Cardiac septum (tissue), 1 donor: ENCODE measurements at regions of chr5 and their contacts with region 1.

Region 1: GRCh38 chr5:10689391-10690081 is 71.5 kb downstream of the DAP start:
- DNase-seq: no peak

Region 2: DNA sequence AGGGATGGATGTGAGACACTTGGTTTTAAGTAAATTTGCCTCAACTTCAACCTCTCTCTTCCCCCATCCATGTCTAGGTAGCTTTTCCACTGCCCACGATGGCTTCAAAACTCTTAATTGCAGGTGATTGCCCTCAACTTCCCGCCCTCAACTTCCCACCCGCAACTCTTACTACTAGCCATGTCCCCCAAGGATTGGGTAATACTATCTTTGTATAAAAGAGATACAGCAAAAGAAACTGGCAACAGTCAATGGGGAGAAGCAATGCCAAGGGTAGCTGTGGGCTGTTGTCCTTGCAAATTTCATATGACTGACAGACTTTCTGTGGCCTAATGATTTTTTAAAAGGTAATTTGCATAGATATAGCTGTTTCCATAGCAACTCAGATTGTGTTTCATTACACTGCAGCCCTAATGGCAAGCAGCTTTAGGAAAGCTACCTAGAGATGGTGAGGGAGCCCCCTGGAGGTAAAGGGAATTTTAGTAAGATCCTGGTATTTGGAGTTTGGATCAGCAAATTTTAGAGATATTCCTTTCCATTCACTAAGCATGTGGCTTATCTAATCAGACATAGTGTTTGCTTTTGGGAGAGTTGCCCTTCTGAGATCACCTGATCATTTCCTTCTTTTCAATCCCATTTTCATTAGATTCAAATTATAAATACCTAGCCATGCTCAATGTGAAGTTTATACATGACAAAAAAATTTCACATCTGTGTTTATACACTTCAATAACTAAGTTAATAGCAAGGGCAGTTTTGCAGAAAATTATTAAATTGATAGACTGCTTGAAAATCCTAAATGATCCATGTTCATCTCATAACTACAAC is 493.1 kb after region 1 on chr5:
- intact Hi-C with region 1: loop called (anchors 5 kb)
- DNase-seq: no peak